ENCODE measurements at regions of chr17 and their contacts with region 1.

Region 1: DNA sequence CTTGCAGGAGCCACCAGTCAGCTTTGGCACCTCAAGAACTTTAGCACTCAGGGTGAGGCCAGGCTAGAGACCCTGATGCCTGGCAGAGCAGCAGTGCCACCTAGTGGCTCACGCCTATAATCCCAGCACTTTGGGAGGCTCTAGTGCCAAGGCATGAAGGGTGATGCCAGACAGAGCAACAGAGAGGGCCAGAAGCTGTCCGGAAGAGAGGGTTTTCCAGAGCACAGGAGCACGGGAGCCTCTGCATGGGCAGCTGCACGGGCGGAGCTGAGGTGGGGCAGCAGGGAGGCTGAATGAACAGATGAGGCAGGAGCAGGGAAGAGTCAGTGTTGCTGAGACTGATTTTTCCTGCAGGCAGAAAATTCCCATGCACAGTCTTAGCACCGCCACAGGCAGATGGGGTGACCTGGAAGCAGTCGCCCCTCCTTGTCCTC is 38.9 kb downstream of the MYH3 start:
- DNase-seq: peak; percentile 87
- H3K4me3 ChIP-seq: no peak overlapping the region
- H3K27ac ChIP-seq: no peak overlapping the region
- H3K4me1 ChIP-seq: peaks cover 0 to 19% (median 0%) of the 10 kb centered on the region in 6 donors
- H3K27me3 ChIP-seq: peaks cover 0 to 5% (median 0%) of the 10 kb centered on the region in 7 donors
- CTCF ChIP-seq: peak; percentile 31 to 85 (median 80)
- POLR2A ChIP-seq: no peak

Region 2: GRCh38 chr17:9924735-9925191 is 693.5 kb before region 1 on chr17:
- intact Hi-C with region 1: loop called (anchors 2 kb)
- DNase-seq: no peak
- H3K4me3 ChIP-seq: no peak overlapping the region
- H3K27ac ChIP-seq: no peak overlapping the region
- H3K4me1 ChIP-seq: peaks cover 0 to 7% (median 5%) of the 10 kb centered on the region in 6 donors
- H3K27me3 ChIP-seq: no peaks in the 10 kb centered on the region
- CTCF ChIP-seq: peak; percentile 59 to 92 (median 84)
- POLR2A ChIP-seq: no peak

Region 3: DNA sequence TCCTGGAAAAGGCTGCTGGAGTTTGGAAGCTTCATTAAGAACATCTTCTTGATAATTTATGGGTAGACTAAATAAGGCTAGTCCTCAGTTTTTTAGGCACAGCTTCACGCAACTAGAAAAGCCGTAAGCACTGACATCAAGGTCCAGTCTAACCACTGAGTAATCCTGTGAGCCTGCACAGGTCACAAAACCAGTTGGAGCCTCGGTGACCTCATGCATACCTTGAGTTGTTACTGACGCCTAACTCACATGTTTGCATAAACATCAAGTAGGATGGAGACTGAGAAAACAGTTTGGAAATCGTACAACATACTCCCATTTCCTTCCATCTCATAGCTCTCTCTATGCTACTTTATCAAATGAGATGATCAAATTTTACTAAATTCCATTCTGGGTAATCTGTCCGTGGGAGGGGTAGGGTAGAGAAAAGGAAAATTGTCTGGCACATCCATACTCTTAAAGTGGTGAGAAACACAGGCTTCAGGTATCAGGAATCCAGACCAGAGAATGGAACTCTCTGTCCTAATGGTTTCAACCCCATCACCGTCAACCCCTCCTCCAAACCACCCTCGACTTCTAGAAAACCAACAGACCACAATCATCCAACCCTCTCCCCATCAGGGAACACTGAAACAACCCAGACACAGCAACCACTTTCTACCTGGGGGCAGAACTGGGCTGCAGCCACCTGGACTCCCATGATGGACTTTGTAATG is 649.2 kb before region 1 on chr17:
- intact Hi-C with region 1: loop called (anchors 10 kb)
- DNase-seq: peak; percentile 4
- H3K4me3 ChIP-seq: no peak overlapping the region
- H3K27ac ChIP-seq: no peak overlapping the region
- H3K4me1 ChIP-seq: peaks cover 0 to 40% (median 13%) of the 10 kb centered on the region in 6 donors
- H3K27me3 ChIP-seq: no peaks in the 10 kb centered on the region
- CTCF ChIP-seq: no peak
- POLR2A ChIP-seq: no peak

Region 4: GRCh38 chr17:10327640-10328039 is 290.6 kb before region 1 on chr17:
- intact Hi-C with region 1: loop called (anchors 5 kb)
- DNase-seq: peak; percentile 84
- H3K4me3 ChIP-seq: no peak overlapping the region
- H3K27ac ChIP-seq: no peak overlapping the region
- H3K4me1 ChIP-seq: peaks cover 0 to 6% (median 2%) of the 10 kb centered on the region in 6 donors
- H3K27me3 ChIP-seq: no peaks in the 10 kb centered on the region
- CTCF ChIP-seq: peak; percentile 80 to 94 (median 91)
- POLR2A ChIP-seq: no peak

Region 5: GRCh38 chr17:10549096-10549842 is 69.0 kb before region 1 on chr17 and contains the start of gene MYH2:
- intact Hi-C with region 1: no loop called
- DNase-seq: no peak
- H3K4me3 ChIP-seq: no peak within 1 kb of the TSS
- H3K27ac ChIP-seq: no peak within 1 kb of the TSS
- H3K4me1 ChIP-seq: no peaks in the 10 kb centered on the region
- H3K27me3 ChIP-seq: peaks cover 0 to 29% (median 0%) of the 10 kb centered on the region in 7 donors
- CTCF ChIP-seq: no peak
- POLR2A ChIP-seq: no peak
- total RNA-seq, gene MYH2: not detected

Region 6: DNA sequence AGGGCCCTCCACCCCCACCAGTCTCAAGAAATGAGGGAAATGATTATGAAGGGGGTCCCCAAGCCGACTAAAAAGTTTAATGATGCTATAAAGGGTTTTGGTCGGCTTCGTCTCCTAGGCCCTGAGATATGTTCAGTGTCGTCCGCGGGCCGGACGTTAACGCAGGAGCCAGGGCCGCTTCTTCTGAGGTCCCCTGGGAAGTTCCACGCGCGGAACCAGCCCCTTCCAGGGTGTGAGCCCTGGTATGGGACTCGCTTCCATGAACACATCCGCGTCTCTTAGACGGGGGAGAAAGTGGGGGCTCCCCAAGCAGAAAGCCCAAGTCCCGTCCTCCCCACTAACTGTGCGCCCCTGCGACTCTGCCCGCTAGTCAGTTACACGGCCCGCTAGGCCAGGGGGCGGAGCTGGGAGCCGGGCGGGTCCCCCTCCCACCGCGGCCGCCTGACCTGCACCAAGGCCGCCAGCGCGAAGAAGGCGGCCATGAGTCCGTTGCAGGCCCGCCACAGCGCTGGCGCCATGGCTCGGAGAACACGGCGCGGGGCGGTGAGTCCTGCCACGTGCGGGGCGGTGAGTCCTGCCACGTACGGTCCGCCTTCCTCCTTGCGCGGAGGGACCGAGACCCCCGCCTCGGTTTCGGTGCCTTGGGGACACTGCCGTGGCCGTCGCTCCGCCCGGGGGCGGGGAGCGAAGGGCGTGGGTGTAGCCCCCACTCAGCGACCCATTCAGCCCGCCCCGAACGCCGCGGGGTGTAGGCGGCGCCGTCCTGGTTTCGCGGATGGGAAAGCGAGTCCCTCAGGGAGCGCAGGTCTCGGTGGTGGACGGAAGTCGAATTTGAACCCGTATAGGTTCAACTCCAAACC is 111.3 kb after region 1 on chr17 and contains the start of gene TMEM220:
- intact Hi-C with region 1: no loop called
- DNase-seq: peak; percentile 92
- H3K4me3 ChIP-seq: peak within 1 kb of the TSS; percentile 58 to 76 (median 66)
- H3K27ac ChIP-seq: peak within 1 kb of the TSS; percentile 85 to 95 (median 90)
- H3K4me1 ChIP-seq: peaks cover 0 to 28% (median 20%) of the 10 kb centered on the region in 6 donors
- H3K27me3 ChIP-seq: peaks cover 0 to 9% (median 0%) of the 10 kb centered on the region in 7 donors
- CTCF ChIP-seq: no peak
- POLR2A ChIP-seq: peak in 1 of 3 donors; percentile 61
- total RNA-seq, gene TMEM220: 4.0 to 12.1 (median 6.1) TPM

Region 7: GRCh38 chr17:11031787-11032186 is 413.6 kb after region 1 on chr17:
- intact Hi-C with region 1: no loop called
- DNase-seq: no peak
- H3K4me3 ChIP-seq: no peak overlapping the region
- H3K27ac ChIP-seq: no peak overlapping the region
- H3K4me1 ChIP-seq: no peaks in the 10 kb centered on the region
- H3K27me3 ChIP-seq: no peaks in the 10 kb centered on the region
- CTCF ChIP-seq: no peak
- POLR2A ChIP-seq: no peak

Measured in spleen (tissue), 13 donors.